Right ventricle myocardium inferior (tissue), 1 donor: ENCODE measurements at regions of chr9 and their contacts with region 1.

Region 1: DNA sequence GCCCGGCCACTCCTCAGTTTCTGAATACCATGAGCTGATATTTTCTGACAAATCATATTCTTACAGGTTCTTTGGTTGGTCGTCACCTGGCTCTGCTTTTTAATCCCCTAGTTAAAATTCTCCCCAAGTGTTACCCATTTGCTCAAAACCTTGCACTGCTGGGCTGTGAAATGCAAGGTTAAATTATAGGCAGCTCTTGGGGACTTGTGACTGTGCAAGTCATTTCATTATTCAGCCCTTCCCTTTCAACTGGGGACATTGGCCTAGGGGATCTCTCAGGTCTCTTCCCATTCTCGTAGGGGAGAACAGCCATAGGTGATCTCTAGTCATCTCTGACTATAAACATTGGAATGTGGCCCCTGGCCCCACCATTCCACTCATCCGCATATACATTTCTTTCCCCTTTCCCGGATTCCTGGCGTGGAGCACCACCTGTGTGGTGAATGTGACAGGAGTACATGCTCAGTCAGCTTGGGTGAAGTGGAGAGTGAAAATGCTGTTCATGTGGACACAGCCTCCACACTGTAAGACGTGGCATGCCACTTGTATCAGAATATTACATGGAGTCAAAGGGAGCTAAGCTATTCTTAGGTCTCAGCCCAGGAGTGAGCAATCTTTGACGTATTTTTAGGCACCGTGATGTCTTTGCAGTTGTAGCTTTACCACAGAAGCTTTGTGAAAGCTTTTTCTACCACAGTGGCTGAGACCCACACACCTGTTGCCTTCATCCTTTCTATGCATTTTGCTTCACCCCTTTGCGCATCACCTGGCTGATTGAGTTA is 386.7 kb downstream of the KDM4C start:
- DNase-seq: no peak
- ATAC-seq: peak; percentile 45

Region 2: DNA sequence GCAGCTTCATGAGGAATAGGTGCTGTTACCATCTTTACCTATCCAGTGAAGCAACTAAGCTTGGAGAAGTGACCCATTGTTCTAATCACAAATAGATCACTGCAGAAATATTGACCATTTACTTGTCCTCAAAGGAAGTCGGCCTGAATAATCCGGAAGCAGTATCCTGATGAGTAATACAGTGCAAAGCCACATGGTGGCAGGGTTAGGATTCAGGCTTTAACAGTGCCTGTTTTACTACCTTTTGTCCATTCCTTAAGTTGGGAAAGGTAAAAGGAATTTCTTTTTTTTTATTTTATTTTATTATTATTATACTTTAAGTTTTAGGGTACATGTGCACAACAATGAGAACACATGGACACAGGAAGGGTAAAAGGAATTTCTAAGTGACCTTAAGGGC is 50.4 kb before region 1 on chr9:
- intact Hi-C with region 1: loop called (anchors 5 kb)
- DNase-seq: no peak
- ATAC-seq: no peak

Region 3: GRCh38 chr9:7186175-7186574 is 41.7 kb after region 1 on chr9:
- intact Hi-C with region 1: no loop called
- DNase-seq: no peak
- ATAC-seq: no peak